ENCODE measurements at regions of chr19 and their contacts with region 1.

Region 1: DNA sequence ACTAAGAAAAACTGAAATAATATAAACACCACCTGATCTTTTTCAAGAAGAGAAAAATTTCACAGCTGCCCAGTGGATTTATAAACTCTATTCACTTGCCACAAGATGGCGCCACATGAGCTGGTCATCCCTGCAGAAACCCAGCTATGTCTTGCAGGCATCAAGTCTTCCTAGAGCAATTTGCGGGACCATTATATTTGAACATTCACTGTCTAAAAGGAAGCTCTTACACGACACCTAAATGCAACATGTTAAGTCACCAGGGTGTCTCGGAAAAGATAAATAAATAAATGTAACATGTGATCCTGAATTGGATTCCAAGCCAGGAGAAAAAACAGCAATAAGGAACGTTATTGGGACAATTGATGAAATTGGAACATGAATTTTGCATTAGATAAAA is 20.3 kb upstream of the AKT2 start:
- H3K4me3 ChIP-seq: no peak overlapping the region
- H3K27ac ChIP-seq: no peak overlapping the region
- H3K4me1 ChIP-seq: peaks cover 13% of the 10 kb centered on the region
- CTCF ChIP-seq: peak; percentile 87; the same call in 1 of the 2 replicates

Region 2: GRCh38 chr19:40322871-40323615 is 17.6 kb after region 1 on chr19:
- CTCF ChIA-PET with region 1: interaction called, 28 read pairs
- POLR2A ChIA-PET with region 1: interaction called, 3 read pairs
- H3K4me3 ChIP-seq: no peak overlapping the region
- H3K27ac ChIP-seq: no peak overlapping the region
- H3K4me1 ChIP-seq: no peaks in the 10 kb centered on the region; the same call in 1 of the 2 replicates
- CTCF ChIP-seq: no peak

Region 3: GRCh38 chr19:40381321-40381720 is 75.9 kb after region 1 on chr19:
- CTCF ChIA-PET with region 1: interaction called, 14 read pairs
- POLR2A ChIA-PET with region 1: no interaction called
- H3K4me3 ChIP-seq: no peak overlapping the region
- H3K27ac ChIP-seq: no peak overlapping the region
- H3K4me1 ChIP-seq: no peaks in the 10 kb centered on the region
- CTCF ChIP-seq: peak; percentile 61

Region 4: DNA sequence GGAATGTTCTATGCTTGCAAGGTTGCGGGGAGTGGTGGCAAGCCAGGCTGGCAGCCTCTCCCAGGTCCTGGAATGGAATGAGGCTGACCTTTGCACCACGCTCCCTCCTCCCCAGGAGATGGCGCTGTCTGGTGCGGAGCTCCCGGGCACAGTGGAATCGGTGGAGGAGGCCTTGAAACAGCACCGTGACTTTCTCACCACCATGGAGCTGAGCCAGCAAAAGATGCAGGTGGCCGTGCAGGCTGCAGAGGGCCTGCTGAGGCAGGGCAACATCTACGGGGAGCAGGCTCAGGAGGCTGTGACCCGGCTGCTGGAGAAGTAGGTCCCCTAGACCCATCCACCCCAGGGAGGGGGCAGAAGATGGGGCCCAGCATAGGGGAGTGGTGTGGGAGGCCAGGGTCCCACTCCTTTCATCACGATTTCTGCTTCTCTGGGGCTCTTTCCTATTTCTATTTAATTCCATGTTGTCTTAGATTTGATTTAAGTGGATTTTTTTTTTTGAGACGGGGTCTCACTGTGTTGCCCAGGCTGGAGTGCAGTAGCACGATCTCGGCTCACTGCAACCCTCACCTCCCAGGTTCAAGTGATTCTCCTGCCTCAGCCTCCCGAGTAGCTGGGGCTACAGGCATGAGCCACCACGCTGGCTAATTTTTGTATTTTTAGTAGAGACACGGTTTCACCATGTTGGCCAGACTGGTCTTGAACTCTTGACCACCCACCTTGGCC is 218.1 kb after region 1 on chr19:
- CTCF ChIA-PET with region 1: interaction called, 13 read pairs
- POLR2A ChIA-PET with region 1: interaction called, 5 read pairs
- H3K4me3 ChIP-seq: no peak overlapping the region; the same call in 1 of the 2 replicates
- H3K27ac ChIP-seq: peak overlapping the region; percentile 47; the same call in 1 of the 2 replicates
- H3K4me1 ChIP-seq: peaks cover 9% of the 10 kb centered on the region
- CTCF ChIP-seq: peak; percentile 99

Region 5: GRCh38 chr19:40570313-40571004 is 265.1 kb after region 1 on chr19:
- CTCF ChIA-PET with region 1: interaction called, 14 read pairs
- POLR2A ChIA-PET with region 1: interaction called, 4 read pairs
- H3K4me3 ChIP-seq: peak overlapping the region; percentile 35
- H3K27ac ChIP-seq: peak overlapping the region; percentile 73
- H3K4me1 ChIP-seq: peaks cover 16% of the 10 kb centered on the region
- CTCF ChIP-seq: peak; percentile 99

Measured in HEK293 (cell line).